Transverse colon (tissue), 4 donors: ENCODE measurements at regions of chr6 and their contacts with region 1.

Region 1: DNA sequence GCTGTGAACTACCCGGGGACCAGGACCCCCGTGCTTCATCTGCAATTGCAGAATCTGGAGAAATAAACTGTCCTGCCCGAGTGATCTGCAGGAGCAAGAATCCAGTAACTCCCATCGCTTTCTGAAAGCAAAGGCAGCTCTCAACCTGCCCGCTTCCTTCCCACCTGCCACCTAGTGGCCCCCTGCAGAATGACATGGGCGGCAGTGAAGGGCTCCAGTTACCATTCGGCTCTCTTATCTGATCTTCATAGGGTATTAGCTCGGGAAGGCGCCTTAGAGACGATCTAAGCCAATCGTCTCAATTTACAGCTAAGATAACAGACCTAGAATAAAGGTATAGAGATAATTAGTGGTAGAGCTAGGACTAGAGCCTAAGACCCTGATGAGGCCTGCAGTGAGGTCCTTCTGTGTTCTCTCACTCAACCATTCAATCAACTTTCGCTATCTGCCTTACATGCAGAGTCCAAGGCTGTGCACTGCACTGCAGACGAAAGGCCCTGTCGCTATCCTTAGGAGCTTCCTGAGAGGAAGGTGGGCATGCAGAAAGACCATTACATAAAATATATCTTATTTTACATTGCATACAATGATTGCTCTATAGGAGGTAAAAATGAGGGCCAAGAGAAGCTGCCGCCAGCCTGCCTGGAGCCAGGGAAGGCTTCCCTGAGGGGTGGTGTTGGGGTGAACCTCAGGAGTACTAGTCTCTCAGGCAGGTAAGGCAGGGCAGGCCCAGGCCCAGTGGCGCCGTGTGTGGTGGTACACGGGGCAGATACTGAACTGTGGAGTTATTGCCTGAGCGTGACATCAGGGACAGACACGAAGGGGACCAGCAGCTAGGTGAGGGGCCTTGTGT is 7.1 kb upstream of the PSMG4 start:
- DNase-seq: peak; percentile 90
- H3K4me3 ChIP-seq: no peak overlapping the region
- H3K27ac ChIP-seq: no peak overlapping the region
- H3K4me1 ChIP-seq: peaks cover 0 to 21% (median 11%) of the 10 kb centered on the region in 4 donors
- H3K27me3 ChIP-seq: no peaks in the 10 kb centered on the region
- CTCF ChIP-seq: peak; percentile 94 to 99 (median 98)
- EP300 ChIP-seq: no peak
- POLR2A ChIP-seq: no peak

Region 2: GRCh38 chr6:2988426-2989331 is 263.0 kb before region 1 on chr6:
- in situ Hi-C with region 1: loop called in 1 of 4 experiments (anchors 10 kb)
- intact Hi-C with region 1: no loop called
- DNase-seq: peak; percentile 90
- H3K4me3 ChIP-seq: peak overlapping the region; percentile 63 to 88 (median 72)
- H3K27ac ChIP-seq: peak overlapping the region; percentile 97 to 99 (median 98)
- H3K4me1 ChIP-seq: peaks cover 17 to 50% (median 35%) of the 10 kb centered on the region in 4 donors
- H3K27me3 ChIP-seq: no peaks in the 10 kb centered on the region
- CTCF ChIP-seq: peak; percentile 82 to 98 (median 92)
- EP300 ChIP-seq: no peak
- POLR2A ChIP-seq: peak; percentile 73

Region 3: GRCh38 chr6:3124667-3125066 is 127.0 kb before region 1 on chr6:
- in situ Hi-C with region 1: loop called (anchors 5 to 10 kb)
- intact Hi-C with region 1: loop called (anchors 5 kb)
- DNase-seq: no peak
- H3K4me3 ChIP-seq: no peak overlapping the region
- H3K27ac ChIP-seq: no peak overlapping the region
- H3K4me1 ChIP-seq: peaks cover 0 to 4% (median 2%) of the 10 kb centered on the region in 4 donors
- H3K27me3 ChIP-seq: no peaks in the 10 kb centered on the region
- CTCF ChIP-seq: no peak
- EP300 ChIP-seq: no peak
- POLR2A ChIP-seq: no peak

Region 4: DNA sequence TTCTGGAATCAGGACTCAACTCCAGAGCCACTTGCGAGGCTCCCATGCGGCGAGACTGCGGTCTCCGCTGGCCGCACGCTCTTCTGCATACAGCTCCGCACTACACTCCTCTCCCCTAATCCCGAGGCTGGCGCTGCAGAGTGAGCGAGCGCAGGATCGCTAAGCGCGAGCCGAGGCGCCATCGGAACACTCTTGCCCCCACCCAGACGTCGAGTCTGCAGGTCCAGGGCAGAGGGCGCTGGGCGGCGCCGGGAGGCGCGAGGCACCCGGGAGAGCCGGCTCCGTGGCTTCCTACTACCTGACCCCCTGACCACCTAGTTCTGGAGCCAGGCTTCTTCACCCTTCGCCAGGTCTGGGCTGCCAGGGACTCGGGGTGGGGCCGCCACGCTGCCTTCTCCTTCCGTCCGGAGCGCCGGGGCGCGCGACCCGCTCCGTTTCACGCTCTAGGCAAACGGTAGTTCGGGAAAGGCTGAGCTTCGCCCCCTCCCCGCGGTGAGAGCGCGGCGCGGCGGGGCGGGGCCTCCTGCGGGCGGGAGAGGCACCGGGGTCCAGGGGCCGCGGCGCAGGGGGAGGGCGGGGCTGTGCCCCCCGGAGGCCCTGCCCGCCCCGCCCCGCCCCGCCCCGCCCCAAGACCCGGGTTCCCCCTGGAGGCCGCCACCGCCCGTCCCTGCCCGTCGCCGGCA is 89.0 kb before region 1 on chr6:
- in situ Hi-C with region 1: no loop called
- intact Hi-C with region 1: loop called (anchors 5 kb)
- DNase-seq: peak; percentile 82
- H3K4me3 ChIP-seq: peak overlapping the region; percentile 66 to 80 (median 71)
- H3K27ac ChIP-seq: peak overlapping the region; percentile 93 to 96 (median 96)
- H3K4me1 ChIP-seq: peaks cover 0 to 45% (median 19%) of the 10 kb centered on the region in 4 donors
- H3K27me3 ChIP-seq: no peaks in the 10 kb centered on the region
- CTCF ChIP-seq: peak in 2 of 5 experiments; percentile 11 to 30
- EP300 ChIP-seq: no peak
- POLR2A ChIP-seq: peak; percentile 77

Region 5: GRCh38 chr6:3231247-3232016 is 20.3 kb before region 1 on chr6:
- in situ Hi-C with region 1: no loop called
- intact Hi-C with region 1: no loop called
- DNase-seq: peak; percentile 84
- H3K4me3 ChIP-seq: peak overlapping the region; percentile 29 to 56 (median 41)
- H3K27ac ChIP-seq: peak overlapping the region; percentile 65 to 83 (median 72)
- H3K4me1 ChIP-seq: peaks cover 16 to 58% (median 53%) of the 10 kb centered on the region in 4 donors
- H3K27me3 ChIP-seq: peaks cover 97% of the 10 kb centered on the region
- CTCF ChIP-seq: no peak
- EP300 ChIP-seq: no peak
- POLR2A ChIP-seq: no peak